Prostate gland (tissue), 2 donors: ENCODE measurements at regions of chr18 and their contacts with region 1.

Region 1: GRCh38 chr18:2540575-2540974 is 30.7 kb downstream of the METTL4 start:
- DNase-seq: no peak
- H3K4me3 ChIP-seq: no peak overlapping the region
- H3K27ac ChIP-seq: no peak overlapping the region
- H3K4me1 ChIP-seq: peaks cover 2% of the 10 kb centered on the region
- H3K27me3 ChIP-seq: no peaks in the 10 kb centered on the region
- CTCF ChIP-seq: no peak
- POLR2A ChIP-seq: no peak

Region 2: DNA sequence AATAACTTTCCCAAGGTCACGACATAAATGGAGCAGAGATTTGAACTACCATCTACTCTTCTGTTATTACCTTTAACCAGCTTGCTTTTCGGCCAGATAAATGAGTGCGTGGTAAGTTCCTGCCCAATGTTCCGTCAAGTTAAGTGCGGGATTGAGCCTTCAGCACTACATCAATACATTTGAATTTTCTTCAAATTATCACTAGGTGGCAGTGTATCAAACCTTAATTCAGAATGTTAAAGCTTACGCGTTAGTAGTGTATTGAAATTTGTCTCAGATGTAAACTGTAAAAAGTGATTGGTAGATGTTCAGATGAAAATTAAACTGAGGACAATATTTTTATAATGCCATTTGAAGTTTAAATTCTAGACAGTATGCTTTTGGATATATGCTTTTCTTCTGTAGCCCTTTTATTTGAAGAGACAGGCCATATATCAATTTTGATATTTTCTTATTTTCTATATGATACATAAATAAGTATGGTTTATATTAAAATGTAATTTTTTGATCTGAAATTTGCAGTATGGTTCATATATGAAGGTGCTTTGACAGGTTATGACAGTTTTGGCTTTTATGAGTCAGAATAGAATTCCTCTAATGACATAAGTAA is 954.6 kb before region 1 on chr18:
- intact Hi-C with region 1: loop called (anchors 5 kb)
- DNase-seq: no peak
- H3K4me3 ChIP-seq: no peak overlapping the region
- H3K27ac ChIP-seq: no peak overlapping the region
- H3K4me1 ChIP-seq: no peaks in the 10 kb centered on the region
- H3K27me3 ChIP-seq: no peaks in the 10 kb centered on the region
- CTCF ChIP-seq: peak in 3 of 4 experiments; percentile 25 to 54 (median 32)
- POLR2A ChIP-seq: no peak

Region 3: DNA sequence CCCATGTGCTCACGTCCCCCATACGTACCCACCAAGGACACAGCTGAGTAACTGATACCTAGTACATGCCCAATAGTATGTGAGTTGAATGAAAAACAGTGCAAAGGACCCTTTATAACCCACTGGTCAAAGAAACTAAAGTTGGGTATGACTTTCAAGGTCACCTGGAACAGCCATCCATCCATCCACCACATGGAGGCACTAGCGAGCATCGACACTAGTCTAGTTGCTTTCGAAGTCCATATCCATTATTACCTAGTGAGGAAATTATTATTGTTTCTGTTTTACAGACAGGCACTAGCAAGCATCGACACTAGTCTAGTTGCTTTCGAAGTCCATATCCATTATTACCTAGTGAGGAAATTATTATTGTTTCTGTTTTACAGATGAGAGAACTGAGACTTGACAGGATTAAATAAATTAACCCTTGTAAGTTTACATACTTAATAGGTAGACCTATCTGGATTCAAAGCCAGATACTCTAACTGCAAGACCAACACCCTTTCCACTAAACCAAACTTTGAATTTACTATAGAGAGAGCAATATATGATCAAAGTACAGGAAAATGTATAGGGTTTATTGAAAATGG is 202.9 kb before region 1 on chr18:
- intact Hi-C with region 1: loop called (anchors 5 kb)
- DNase-seq: no peak
- H3K4me3 ChIP-seq: no peak overlapping the region
- H3K27ac ChIP-seq: no peak overlapping the region
- H3K4me1 ChIP-seq: no peaks in the 10 kb centered on the region
- H3K27me3 ChIP-seq: no peaks in the 10 kb centered on the region
- CTCF ChIP-seq: peak in 3 of 4 experiments; percentile 28 to 38 (median 33)
- POLR2A ChIP-seq: no peak

Region 4: DNA sequence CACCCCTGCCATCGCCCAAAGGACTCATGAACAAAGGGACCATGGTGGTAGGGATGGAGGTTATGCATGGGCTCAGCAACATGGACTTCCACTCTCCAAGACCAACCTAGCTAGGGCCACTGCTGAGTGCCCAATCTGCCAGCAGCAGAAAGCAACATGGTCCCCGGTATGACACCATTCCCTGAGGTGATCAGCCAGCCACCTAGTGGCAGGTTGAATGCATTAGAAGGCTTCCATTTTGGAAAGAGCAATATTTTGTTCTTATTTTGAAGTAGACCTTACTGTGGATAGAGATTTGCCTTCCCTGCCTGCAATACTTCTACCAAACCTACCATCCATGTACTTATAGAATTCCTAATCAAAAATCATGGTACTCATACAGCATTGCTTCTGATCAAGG is 69.1 kb before region 1 on chr18:
- intact Hi-C with region 1: no loop called
- DNase-seq: no peak
- H3K4me3 ChIP-seq: no peak overlapping the region
- H3K27ac ChIP-seq: no peak overlapping the region
- H3K4me1 ChIP-seq: no peaks in the 10 kb centered on the region
- H3K27me3 ChIP-seq: no peaks in the 10 kb centered on the region
- CTCF ChIP-seq: no peak
- POLR2A ChIP-seq: no peak

Region 5: GRCh38 chr18:2618009-2618408 is 77.4 kb after region 1 on chr18:
- intact Hi-C with region 1: no loop called
- DNase-seq: no peak
- H3K4me3 ChIP-seq: no peak overlapping the region
- H3K27ac ChIP-seq: no peak overlapping the region
- H3K4me1 ChIP-seq: no peaks in the 10 kb centered on the region
- H3K27me3 ChIP-seq: no peaks in the 10 kb centered on the region
- CTCF ChIP-seq: no peak
- POLR2A ChIP-seq: no peak